T-cell (primary cell): ENCODE measurements at regions of chr4 and their contacts with region 1.

Region 1: DNA sequence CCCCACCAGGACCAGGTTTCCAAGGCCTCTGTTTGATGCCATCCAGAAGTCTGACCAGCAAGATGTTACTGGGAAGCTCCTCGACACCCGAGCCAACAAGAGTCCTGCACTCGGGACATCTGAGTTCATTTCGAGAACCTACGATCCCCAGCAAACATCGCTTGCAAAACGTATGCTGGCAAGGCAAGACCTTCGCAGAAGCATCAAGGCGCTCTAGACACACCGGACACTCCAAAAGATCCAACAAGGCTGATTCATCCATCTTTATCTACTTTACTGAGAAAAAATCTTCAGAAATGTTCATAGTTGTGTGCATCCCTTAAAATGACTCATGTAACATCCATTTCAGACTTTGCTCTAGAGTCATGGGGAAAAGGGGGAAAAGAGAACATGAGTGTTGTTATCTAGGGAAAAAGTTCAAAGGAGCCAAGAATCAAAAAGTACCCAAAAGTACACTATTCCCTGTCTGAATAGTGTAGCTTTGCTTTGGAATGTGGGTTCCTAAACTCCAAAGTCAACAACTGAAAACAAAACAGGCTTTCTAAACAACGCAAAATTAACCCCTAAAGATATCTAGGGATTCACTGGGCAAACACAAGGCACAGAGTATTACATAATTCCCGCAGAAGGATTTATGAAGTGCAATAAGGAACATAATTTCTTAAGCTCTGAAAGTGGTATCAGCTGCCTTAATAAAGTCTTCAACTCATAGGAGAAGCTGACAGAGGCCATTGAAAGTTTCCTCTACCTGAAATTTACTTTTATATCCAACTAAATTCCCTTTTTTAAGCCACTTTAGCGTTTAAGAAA is 1.6 kb downstream of the SH3RF1 start:
- DNase-seq: no peak
- ATAC-seq: no peak
- H3K4me3 ChIP-seq: no peak overlapping the region
- H3K4me3 Mint-ChIP-seq: peak overlapping the region in 2 of 3 donors; percentile 67 to 72
- H3K27ac ChIP-seq: no peak overlapping the region
- H3K27ac Mint-ChIP-seq: no peak overlapping the region
- H3K4me1 ChIP-seq: peaks cover 7 to 16% of the 10 kb centered on the region in 2 experiments
- H3K4me1 Mint-ChIP-seq: peaks cover 8 to 13% (median 10%) of the 10 kb centered on the region in 3 donors
- H3K27me3 ChIP-seq: peaks cover 0 to 32% of the 10 kb centered on the region in 2 experiments
- H3K27me3 Mint-ChIP-seq: peaks cover 51 to 54% of the 10 kb centered on the region in 2 donors

Region 2: GRCh38 chr4:169133932-169134331 is 135.2 kb before region 1 on chr4:
- CTCF ChIA-PET with region 1: no interaction called
- POLR2A ChIA-PET with region 1: no interaction called
- DNase-seq: no peak
- ATAC-seq: no peak
- H3K4me3 ChIP-seq: no peak overlapping the region
- H3K4me3 Mint-ChIP-seq: no peak overlapping the region
- H3K27ac ChIP-seq: no peak overlapping the region
- H3K27ac Mint-ChIP-seq: no peak overlapping the region
- H3K4me1 ChIP-seq: no peaks in the 10 kb centered on the region
- H3K4me1 Mint-ChIP-seq: no peaks in the 10 kb centered on the region
- H3K27me3 ChIP-seq: no peaks in the 10 kb centered on the region
- H3K27me3 Mint-ChIP-seq: peaks cover 6 to 14% of the 10 kb centered on the region in 2 donors

Region 3: DNA sequence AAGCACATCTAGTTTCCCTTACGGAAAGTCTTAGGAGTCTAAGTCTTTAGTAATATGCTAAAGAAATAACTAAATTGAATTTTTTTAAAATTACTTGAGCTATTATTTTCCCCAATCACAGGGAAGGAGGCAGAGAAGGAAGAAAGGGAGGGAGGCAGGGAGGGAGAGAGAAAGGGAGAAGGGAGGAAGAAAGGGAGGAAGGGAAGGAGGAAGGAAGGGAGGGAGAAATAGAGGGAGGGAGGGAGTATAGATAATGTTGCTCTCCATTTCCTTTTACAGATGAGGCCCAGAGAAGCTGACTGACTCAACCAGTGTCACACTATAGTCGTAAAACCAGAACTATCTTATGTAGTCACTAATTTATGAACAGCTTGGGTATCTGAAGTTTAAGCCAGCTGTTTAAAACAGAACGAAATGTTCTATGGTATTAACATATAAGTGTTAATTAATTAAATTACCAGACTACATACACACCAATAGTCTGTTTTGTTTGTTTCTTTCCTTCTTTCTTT is 13.0 kb before region 1 on chr4:
- CTCF ChIA-PET with region 1: no interaction called
- POLR2A ChIA-PET with region 1: interaction called in 1 of 2 experiments, 13 read pairs
- DNase-seq: no peak
- ATAC-seq: no peak
- H3K4me3 ChIP-seq: no peak overlapping the region
- H3K4me3 Mint-ChIP-seq: no peak overlapping the region
- H3K27ac ChIP-seq: no peak overlapping the region
- H3K27ac Mint-ChIP-seq: no peak overlapping the region
- H3K4me1 ChIP-seq: no peaks in the 10 kb centered on the region
- H3K4me1 Mint-ChIP-seq: no peaks in the 10 kb centered on the region
- H3K27me3 ChIP-seq: peaks cover 0 to 7% of the 10 kb centered on the region in 2 experiments
- H3K27me3 Mint-ChIP-seq: peaks cover 7 to 16% of the 10 kb centered on the region in 2 donors

Region 4: GRCh38 chr4:169293343-169294176 is 24.4 kb after region 1 on chr4:
- CTCF ChIA-PET with region 1: no interaction called
- POLR2A ChIA-PET with region 1: no interaction called
- DNase-seq: peak in 1 of 35 experiments; percentile 16
- ATAC-seq: no peak
- H3K4me3 ChIP-seq: no peak overlapping the region
- H3K4me3 Mint-ChIP-seq: no peak overlapping the region
- H3K27ac ChIP-seq: no peak overlapping the region
- H3K27ac Mint-ChIP-seq: no peak overlapping the region
- H3K4me1 ChIP-seq: no peaks in the 10 kb centered on the region
- H3K4me1 Mint-ChIP-seq: no peaks in the 10 kb centered on the region
- H3K27me3 ChIP-seq: peaks cover 0 to 11% of the 10 kb centered on the region in 2 experiments
- H3K27me3 Mint-ChIP-seq: peaks cover 33 to 35% of the 10 kb centered on the region in 2 donors